AG04449 (cell line): ENCODE measurements at regions of chr9 and their contacts with region 1.

Region 1: DNA sequence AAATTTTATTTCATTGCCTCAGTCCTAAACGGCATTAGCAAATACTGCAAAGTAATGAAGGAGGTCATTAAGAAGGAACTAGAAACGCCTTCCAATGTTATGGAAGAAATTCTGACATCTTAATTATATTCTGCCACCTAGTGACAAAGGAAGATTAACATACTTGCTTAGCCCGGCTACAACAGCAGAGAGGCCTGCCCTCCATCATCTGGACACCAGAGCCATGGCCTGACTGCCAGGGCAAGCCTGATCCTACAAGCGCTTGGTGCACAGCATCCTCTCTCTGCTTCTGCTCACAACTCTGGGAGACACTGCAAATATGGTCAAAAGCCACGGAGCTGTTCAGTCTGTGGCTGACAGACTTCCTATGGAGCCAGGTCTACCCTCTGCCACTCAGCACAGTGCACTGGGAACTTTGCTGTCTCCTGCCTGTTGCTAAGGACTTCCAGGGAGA is 87.3 kb upstream of the SLC44A1 start:
- DNase-seq: peak; percentile 41
- H3K4me3 ChIP-seq: no peak overlapping the region
- CTCF ChIP-seq: peak; percentile 37

Region 2: GRCh38 chr9:104780799-104781395 is 376.3 kb before region 1 on chr9:
- CTCF ChIA-PET with region 1: interaction called, 10 read pairs
- POLR2A ChIA-PET with region 1: no interaction called
- DNase-seq: no peak
- H3K4me3 ChIP-seq: no peak overlapping the region
- CTCF ChIP-seq: peak; percentile 36

Region 3: GRCh38 chr9:104808035-104808614 is 349.0 kb before region 1 on chr9:
- CTCF ChIA-PET with region 1: interaction called, 12 read pairs
- POLR2A ChIA-PET with region 1: no interaction called
- DNase-seq: no peak
- H3K4me3 ChIP-seq: no peak overlapping the region
- CTCF ChIP-seq: peak; percentile 20

Region 4: GRCh38 chr9:104927912-104928740 is 229.0 kb before region 1 on chr9 and contains the start of gene ABCA1:
- CTCF ChIA-PET with region 1: interaction called, 22 read pairs
- POLR2A ChIA-PET with region 1: no interaction called
- DNase-seq: no peak
- H3K4me3 ChIP-seq: peak within 1 kb of the TSS; percentile 73
- CTCF ChIP-seq: no peak

Region 5: DNA sequence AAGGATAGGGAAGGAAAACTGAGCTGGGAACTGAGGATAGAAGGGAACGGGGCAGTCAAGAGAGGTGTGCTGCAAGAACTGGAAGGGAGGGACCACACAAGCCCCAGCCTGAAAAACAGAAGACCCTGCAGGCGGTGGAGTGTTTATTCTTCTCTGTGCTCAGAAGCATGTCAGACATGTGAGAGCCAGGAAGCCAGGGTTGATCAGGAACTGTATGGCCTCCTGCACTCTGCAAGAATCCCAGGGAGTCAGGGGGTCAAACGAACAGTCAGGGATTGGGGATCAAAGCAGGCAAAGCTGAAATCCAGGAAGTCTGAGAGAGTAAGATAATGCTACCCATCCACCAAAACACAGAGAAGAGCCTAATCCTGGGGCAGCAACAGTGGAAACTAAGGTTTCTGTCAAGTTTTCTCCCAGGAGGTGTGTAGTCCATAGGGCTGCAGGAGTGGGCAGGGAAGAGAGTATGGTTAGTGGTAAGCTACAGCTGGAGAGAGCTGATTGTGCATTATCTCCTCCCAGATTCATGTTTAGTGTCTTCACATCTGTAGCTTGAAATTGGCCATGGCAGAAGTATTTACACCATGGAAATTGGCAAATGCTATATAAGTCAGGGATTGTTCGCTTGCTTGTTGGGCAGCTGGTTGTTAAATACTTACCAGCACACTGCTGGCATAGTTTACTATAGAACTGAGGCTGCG is 28.1 kb before region 1 on chr9:
- CTCF ChIA-PET with region 1: no interaction called
- POLR2A ChIA-PET with region 1: no interaction called
- DNase-seq: no peak
- H3K4me3 ChIP-seq: no peak overlapping the region
- CTCF ChIP-seq: no peak

Region 6: DNA sequence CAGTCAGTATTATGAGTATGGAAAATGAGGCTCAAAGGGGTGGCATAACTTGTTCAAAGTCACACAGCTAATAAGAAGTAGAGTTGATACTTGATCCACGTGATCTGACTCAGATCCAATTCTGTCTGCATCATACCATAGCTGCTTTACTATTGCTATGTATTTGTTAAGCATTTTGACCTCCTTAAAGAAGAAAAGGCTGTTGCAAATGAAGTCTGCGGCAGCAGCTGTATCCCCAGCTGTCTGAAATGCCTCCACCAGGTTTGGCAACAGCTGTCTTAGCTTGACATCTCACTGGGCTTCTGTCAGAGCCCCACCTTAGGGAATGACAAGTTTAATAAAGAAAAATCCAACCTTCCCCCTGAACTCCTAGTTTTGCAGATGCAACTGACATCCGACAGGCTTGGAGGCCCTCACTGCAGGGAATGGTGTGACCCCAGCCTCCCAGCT is 11.7 kb after region 1 on chr9:
- CTCF ChIA-PET with region 1: interaction called, 18 read pairs
- POLR2A ChIA-PET with region 1: no interaction called
- DNase-seq: peak; percentile 21
- H3K4me3 ChIP-seq: no peak overlapping the region
- CTCF ChIP-seq: no peak

Region 7: DNA sequence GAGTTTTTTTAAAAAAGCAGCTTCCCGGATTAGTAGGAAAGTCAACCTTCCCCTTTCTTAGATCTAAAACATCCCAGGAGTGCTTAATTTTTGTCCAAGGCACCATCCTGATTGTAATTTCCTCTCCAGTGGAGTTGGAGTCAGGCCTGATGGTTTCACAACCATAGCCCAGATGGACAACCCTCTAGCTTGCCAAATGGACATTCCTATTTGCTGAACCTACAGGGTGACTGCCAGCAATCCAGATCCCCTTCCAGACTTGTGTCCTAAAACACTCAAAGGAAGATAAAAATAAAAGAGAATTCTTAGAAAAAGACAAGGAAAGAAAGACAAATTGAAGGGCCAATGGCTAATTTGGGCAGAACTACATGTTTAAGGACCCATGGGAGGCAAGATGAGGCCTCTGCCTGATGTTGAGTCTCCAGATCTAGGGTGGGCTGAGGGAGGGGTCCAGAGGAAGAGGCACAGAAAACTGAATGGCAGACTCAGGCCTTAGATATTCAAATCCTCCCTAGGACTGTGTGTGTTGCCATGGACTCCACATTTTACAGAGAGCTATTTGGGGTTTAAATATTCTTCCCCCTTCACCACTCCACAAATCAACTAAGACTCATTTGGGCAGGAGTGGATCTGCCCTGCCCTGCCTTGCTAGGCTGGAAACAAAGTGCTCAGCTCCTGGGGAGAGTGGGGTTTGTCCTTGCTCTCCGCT is 48.8 kb after region 1 on chr9:
- CTCF ChIA-PET with region 1: no interaction called
- POLR2A ChIA-PET with region 1: no interaction called
- DNase-seq: peak; percentile 75
- H3K4me3 ChIP-seq: no peak overlapping the region
- CTCF ChIP-seq: no peak